ENCODE measurements at regions of chr11 and their contacts with region 1.

Region 1: DNA sequence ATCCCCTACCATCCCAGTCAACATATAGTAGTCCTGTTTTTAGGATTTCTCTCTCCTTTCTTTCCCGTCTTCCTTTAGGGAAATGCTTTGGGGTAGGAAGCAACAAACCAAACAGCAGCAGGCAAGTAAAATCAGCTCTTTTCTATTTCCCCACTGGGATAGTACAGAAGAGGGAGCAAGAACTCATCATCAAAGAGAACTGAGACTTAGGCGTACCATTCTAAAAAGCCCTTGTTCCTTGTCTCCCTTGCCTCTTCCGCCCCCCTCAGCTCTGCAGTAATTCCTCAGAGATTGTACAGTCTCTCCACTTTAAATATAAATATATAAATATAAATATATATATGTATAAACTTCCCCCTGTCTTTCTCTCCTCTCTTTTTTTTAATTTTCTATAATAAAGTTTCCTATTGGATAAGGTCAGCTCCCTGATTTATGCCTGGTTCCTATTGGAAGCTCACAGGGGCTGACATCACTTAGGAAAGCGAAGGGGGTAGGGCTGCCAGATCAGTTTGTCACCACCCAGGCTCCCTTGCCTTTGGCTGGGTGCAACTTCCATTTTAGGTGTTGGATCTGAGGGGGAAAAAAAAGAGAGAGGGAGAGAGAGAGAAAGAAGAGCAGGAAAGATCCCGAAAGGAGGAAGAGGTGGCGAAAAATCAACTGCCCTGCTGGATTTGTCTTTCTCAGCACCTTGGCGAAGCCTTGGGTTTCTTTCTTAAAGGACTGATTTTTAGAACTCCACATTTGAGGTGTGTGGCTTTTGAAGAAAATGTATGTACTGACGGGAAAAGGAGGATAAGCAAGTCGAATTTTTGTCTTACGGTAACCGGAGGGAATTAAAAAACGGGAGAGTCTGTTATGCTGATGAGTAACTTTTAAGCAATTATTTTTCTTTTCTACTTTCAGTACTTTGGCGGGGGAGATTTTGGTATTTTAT is at the start of gene CTNND1:
- DNase-seq: peak; percentile 91
- H3K4me3 ChIP-seq: peak within 1 kb of the TSS; percentile 63 to 73
- H3K27ac ChIP-seq: peak within 1 kb of the TSS; percentile 96 to 97
- H3K4me1 ChIP-seq: peaks cover 5 to 17% of the 10 kb centered on the region in 2 experiments; a peak in 3 of 4 replicates
- H3K27me3 ChIP-seq: no peaks in the 10 kb centered on the region
- CTCF ChIP-seq: no peak
- EP300 ChIP-seq: no peak
- RAD21 ChIP-seq: no peak
- polyA plus RNA-seq, gene CTNND1: 39.4 and 49.4 TPM in 2 replicates

Region 2: DNA sequence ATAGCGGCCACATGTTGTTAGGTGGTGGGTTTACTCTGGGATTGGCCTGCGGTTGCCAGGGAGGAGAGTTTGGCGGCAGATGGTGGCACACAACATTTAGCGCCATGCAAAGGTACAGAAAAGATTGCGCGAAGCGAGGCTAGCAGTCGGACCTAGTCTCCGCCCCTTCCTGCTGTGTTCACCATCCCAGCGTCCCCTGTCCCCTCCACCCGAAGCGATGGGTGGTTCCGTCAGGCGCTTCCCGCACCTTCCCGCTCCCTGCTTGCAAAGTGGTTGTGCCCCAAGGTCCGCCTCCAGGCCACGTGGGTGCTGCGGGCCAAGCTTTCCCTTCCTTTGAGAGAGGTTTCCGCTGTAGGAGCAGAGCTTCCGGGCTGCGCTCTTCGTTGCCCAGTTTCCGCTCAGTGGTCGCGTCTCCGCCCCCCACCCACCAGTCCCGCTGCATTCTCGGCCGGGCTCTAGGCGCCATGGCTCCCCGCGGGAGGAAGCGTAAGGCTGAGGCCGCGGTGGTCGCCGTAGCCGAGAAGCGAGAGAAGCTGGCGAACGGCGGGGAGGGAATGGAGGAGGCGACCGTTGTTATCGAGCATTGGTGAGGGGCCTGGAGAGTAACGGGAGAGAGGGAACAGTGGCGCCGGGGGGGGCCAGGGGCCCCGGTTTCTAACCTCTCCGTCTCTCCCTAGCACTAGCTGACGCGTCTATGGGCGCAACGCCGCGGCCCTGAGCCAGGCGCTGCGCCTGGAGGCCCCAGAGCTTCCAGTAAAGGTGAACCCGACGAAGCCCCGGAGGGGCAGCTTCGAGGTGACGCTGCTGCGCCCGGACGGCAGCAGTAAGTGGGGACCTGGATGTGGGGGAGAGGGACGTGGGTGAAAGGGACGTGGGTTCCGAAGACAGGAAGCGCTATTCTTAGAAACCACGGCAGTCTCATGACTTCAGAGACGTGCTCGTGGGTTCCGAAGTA is 20.2 kb before region 1 on chr11 and contains the start of gene SELENOH:
- CTCF ChIA-PET with region 1: interaction called, 10 read pairs
- POLR2A ChIA-PET with region 1: interaction called, 17 read pairs
- DNase-seq: peak; percentile 94
- H3K4me3 ChIP-seq: peak within 1 kb of the TSS; percentile 90 to 98
- H3K27ac ChIP-seq: peak within 1 kb of the TSS; percentile 85 to 88
- H3K4me1 ChIP-seq: peaks cover 0 to 7% of the 10 kb centered on the region in 2 experiments; a peak in 3 of 4 replicates
- H3K27me3 ChIP-seq: no peaks in the 10 kb centered on the region
- CTCF ChIP-seq: no peak
- EP300 ChIP-seq: peak in 1 of 2 experiments; percentile 48; a peak in 2 of 4 replicates
- RAD21 ChIP-seq: no peak
- polyA plus RNA-seq, gene SELENOH: 291 and 333 TPM in 2 replicates

Region 3: GRCh38 chr11:57778318-57779037 is 16.9 kb after region 1 on chr11:
- CTCF ChIA-PET with region 1: interaction called, 12 read pairs
- POLR2A ChIA-PET with region 1: interaction called, 6 read pairs
- DNase-seq: peak; percentile 83
- H3K4me3 ChIP-seq: peak overlapping the region; percentile 19 to 43
- H3K27ac ChIP-seq: peak overlapping the region; percentile 89 to 92
- H3K4me1 ChIP-seq: peaks cover 35 to 53% of the 10 kb centered on the region in 2 experiments
- H3K27me3 ChIP-seq: no peaks in the 10 kb centered on the region
- CTCF ChIP-seq: no peak
- EP300 ChIP-seq: peak in 1 of 2 experiments; percentile 52; a peak in 3 of 4 replicates
- RAD21 ChIP-seq: no peak

Region 4: GRCh38 chr11:58047818-58048217 is 286.2 kb after region 1 on chr11:
- CTCF ChIA-PET with region 1: no interaction called
- POLR2A ChIA-PET with region 1: no interaction called
- DNase-seq: no peak
- H3K4me3 ChIP-seq: no peak overlapping the region
- H3K27ac ChIP-seq: no peak overlapping the region
- H3K4me1 ChIP-seq: no peaks in the 10 kb centered on the region
- H3K27me3 ChIP-seq: peaks cover 8% of the 10 kb centered on the region; the same call in 1 of the 2 replicates
- CTCF ChIP-seq: no peak
- EP300 ChIP-seq: no peak
- RAD21 ChIP-seq: no peak